Activated B cell treated with CpG ODN at 0.5 μM for 24 hours (primary cell): ENCODE measurements at regions of chr10 and their contacts with region 1.

Region 1: DNA sequence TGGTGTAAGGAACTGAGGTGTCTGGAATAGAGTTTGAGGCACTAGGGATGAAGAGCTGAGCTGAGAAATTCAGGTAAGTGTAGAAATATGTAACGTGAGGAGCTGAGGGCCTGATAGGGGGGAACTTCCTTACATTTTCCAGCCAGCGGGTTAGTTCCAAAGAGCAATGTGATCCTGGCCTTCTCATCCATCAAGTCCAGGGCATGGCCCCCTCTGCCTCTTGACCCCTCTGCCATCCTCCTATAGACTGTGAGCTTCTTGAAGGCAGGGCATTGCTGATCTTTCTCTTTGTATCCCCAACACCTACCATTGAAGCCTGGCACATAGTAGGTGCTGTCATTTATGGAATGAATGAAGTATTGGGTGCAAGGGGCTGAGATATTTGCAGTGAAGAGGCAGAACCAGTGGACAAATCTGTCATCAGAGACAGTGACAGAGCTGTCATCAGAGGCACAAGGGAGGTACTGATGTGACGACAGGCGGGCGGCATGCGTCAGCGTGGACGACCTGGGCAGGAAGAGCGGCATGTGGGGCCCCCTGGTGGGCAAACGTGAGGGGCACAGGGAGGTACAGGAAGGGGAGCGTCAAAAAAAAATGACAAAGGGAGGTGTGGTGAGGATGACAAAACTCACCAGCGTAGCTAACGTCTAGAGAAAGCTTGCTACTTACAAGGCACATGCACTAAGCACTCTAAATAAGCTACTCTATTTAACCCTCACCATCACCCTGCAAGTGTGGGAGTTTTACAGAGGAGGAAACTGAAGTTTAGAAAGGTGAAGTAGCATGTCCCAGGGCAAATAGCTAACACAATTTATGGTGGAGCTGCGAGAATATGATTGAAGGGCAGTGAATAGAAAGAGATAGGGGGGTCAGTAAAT is 5.2 kb upstream of the CAMK2G start:
- DNase-seq: peak; percentile 86
- ATAC-seq: peak; percentile 96
- H3K4me3 Mint-ChIP-seq: no peak overlapping the region
- H3K27ac Mint-ChIP-seq: peak overlapping the region; percentile 67
- H3K4me1 Mint-ChIP-seq: peaks cover 22% of the 10 kb centered on the region
- H3K27me3 Mint-ChIP-seq: no peaks in the 10 kb centered on the region
- CTCF ChIP-seq: no peak

Region 2: DNA sequence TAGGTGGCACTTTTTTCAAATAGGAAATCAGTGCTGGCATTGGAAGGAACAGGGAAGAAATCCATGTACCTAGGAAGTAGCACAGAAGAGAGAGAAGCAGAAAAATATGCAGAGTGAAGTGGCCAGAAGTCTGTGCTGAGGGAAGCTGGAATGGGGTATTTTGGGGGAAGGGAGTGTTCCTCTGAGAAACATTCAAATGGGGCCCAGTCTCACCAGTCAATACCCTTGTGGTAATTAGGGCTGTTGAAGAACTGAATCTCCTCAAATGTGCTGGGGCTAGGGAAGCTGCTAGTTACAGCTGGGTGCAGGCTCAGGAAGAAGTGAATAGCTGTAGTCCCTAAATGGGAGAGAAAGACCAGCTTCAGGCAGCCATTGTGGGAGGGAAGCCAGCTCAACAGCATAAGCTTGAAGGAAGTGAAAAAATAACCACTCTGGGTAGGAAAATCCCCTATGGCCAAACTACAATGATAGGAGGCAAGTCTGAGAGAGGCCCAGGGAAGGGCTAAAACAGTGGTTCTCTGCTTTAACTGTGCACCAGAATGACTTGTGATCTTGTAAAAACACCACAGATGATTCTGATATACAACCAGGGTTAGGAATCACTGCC is 75.8 kb before region 1 on chr10:
- CTCF ChIA-PET with region 1: no interaction called
- POLR2A ChIA-PET with region 1: no interaction called
- intact Hi-C with region 1: no loop called
- DNase-seq: no peak
- ATAC-seq: peak; percentile 78
- H3K4me3 Mint-ChIP-seq: no peak overlapping the region
- H3K27ac Mint-ChIP-seq: peak overlapping the region; percentile 78
- H3K4me1 Mint-ChIP-seq: peaks cover 24% of the 10 kb centered on the region
- H3K27me3 Mint-ChIP-seq: no peaks in the 10 kb centered on the region
- CTCF ChIP-seq: no peak

Region 3: DNA sequence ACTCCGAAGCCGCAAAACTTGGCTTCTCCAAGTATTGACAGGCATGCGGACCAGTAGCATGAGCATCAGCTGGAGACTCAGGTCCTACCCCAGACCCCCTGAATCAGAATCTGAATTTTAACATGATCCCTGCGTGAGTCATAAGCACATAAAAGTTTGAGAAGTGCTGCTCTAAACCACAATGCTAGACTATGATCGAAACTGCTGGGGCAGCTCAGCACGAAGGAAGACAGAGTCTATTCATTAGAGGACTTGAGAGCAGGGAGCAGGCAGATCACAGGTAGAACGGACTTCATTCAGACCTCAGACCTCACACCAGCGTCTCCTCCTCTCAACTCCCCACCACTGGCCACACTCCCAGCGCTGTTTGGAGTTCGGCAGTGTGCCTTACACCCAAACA is 22.1 kb before region 1 on chr10:
- CTCF ChIA-PET with region 1: interaction called, 25 read pairs
- POLR2A ChIA-PET with region 1: interaction called, 4 read pairs
- intact Hi-C with region 1: no loop called
- DNase-seq: no peak
- ATAC-seq: no peak
- H3K4me3 Mint-ChIP-seq: no peak overlapping the region
- H3K27ac Mint-ChIP-seq: no peak overlapping the region
- H3K4me1 Mint-ChIP-seq: peaks cover 5% of the 10 kb centered on the region
- H3K27me3 Mint-ChIP-seq: no peaks in the 10 kb centered on the region
- CTCF ChIP-seq: no peak

Region 4: GRCh38 chr10:73865459-73866442 is 13.8 kb before region 1 on chr10:
- CTCF ChIA-PET with region 1: interaction called, 25 read pairs
- POLR2A ChIA-PET with region 1: interaction called, 33 read pairs
- intact Hi-C with region 1: loop called (anchors 1 kb)
- DNase-seq: peak; percentile 46
- ATAC-seq: peak; percentile 93
- H3K4me3 Mint-ChIP-seq: peak overlapping the region; percentile 73
- H3K27ac Mint-ChIP-seq: peak overlapping the region; percentile 96
- H3K4me1 Mint-ChIP-seq: peaks cover 46% of the 10 kb centered on the region
- H3K27me3 Mint-ChIP-seq: no peaks in the 10 kb centered on the region
- CTCF ChIP-seq: no peak